H1 (cell line): ENCODE measurements at regions of chr13 and their contacts with region 1.

Region 1: DNA sequence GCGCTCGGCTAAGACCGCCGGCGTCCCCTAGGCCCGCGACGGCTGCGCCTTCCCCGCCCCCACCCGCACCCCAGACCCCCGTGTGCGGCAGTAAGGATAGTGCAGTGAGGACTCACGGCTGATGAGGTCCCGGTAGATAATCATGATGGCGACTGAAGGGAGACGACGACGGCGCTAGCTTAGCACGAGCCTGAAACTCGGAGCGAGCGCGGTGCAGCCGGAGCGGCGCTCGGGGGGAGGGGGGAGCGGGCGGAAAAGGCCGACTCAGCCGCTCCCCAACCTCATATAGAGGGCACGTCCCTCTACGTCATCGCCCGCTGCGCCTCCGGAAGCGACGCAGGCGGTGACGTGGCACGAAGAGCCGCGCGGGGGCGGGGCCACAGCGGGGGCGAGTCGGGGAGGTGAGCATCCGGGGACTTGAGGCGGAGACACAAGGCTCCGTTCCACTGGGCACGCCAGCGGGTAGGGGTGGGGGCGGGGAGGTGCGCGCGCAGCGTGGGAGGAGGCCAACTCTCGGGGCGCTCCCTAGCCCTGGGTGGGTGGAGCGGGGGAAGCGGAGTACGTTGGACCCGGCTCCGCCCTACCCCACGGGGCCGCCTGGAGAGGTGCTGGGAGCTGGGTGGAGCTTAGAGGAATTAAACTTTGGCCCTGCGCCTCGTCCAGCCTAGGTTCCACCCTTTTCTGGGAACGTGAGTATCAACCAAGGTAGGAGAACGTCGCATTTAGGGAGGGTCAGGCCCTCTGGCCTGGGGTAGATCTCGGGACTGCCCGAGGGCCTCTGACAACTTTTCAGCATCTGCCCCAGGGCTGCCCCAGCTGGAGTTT is at the start of gene TPT1:
- DNase-seq: peak; percentile 98 to 99
- H3K4me3 ChIP-seq: peak within 1 kb of the TSS; percentile 87 to 91 (median 88)
- H3K27ac ChIP-seq: peak within 1 kb of the TSS; percentile 94
- H3K4me1 ChIP-seq: peaks cover 0 to 4% (median 2%) of the 10 kb centered on the region in 4 experiments; a peak in 4 of 7 replicates
- H3K27me3 ChIP-seq: no peaks in the 10 kb centered on the region
- CTCF ChIP-seq: no peak
- EP300 ChIP-seq: peak in 1 of 2 experiments; percentile 16; a peak in 1 of 3 replicates
- POLR2A ChIP-seq: peak; percentile 91 to 95
- RAD21 ChIP-seq: no peak
- total RNA-seq, gene TPT1: 2,279 and 2,327 TPM in 2 replicates

Region 2: GRCh38 chr13:45231722-45232121 is 109.4 kb before region 1 on chr13:
- CTCF ChIA-PET with region 1: no interaction called
- POLR2A ChIA-PET with region 1: no interaction called
- DNase-seq: no peak
- H3K4me3 ChIP-seq: no peak overlapping the region
- H3K27ac ChIP-seq: no peak overlapping the region
- H3K4me1 ChIP-seq: no peaks in the 10 kb centered on the region
- H3K27me3 ChIP-seq: no peaks in the 10 kb centered on the region
- CTCF ChIP-seq: no peak
- EP300 ChIP-seq: no peak
- POLR2A ChIP-seq: no peak
- RAD21 ChIP-seq: no peak

Region 3: DNA sequence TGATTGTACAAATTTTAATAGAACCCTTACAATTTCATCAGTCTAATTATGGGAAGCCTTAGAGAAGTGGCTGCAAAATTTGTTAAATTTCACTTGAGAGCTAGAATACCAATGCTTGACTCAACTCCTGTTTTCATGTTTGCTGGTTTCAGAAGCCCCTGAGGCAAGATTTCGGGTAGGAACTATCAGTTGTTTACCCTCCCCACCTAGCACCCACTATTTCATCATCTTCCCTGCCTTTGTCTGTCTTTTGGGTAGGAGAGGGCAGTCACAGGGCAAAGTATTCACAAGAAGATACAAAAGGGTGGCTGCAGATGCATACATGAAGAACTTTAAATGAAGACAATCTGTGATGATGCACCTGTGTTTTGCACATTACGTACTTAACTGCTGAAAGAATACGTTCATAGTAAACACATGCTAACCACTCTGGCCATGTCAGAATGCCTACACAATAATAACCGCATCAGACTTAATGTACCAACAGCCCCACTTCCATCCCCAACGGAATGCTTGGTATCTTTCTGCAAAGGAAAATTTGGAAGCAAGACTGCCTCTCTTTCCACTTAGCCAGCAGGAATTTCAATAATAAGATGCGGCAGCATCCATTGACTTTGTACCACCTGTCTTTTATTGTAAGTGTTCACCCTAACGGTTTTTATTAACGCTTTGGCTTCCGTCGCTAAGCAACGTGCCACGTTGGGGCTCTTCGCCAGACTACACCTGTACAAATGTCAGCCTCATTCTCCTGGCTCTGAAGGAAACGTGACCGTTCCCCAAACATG is 30.6 kb before region 1 on chr13:
- CTCF ChIA-PET with region 1: no interaction called
- POLR2A ChIA-PET with region 1: interaction called, 319 read pairs
- DNase-seq: no peak
- H3K4me3 ChIP-seq: peak overlapping the region; percentile 9 to 65 (median 44); a peak in 7 of 8 replicates
- H3K27ac ChIP-seq: no peak overlapping the region
- H3K4me1 ChIP-seq: peaks cover 0 to 17% (median 12%) of the 10 kb centered on the region in 4 experiments
- H3K27me3 ChIP-seq: no peaks in the 10 kb centered on the region
- CTCF ChIP-seq: no peak
- EP300 ChIP-seq: no peak
- POLR2A ChIP-seq: no peak
- RAD21 ChIP-seq: no peak

Region 4: GRCh38 chr13:45325806-45326205 is 15.3 kb before region 1 on chr13:
- CTCF ChIA-PET with region 1: interaction called, 6 read pairs
- POLR2A ChIA-PET with region 1: interaction called, 319 read pairs
- DNase-seq: no peak
- H3K4me3 ChIP-seq: no peak overlapping the region
- H3K27ac ChIP-seq: no peak overlapping the region
- H3K4me1 ChIP-seq: no peaks in the 10 kb centered on the region
- H3K27me3 ChIP-seq: no peaks in the 10 kb centered on the region
- CTCF ChIP-seq: no peak
- EP300 ChIP-seq: no peak
- POLR2A ChIP-seq: no peak
- RAD21 ChIP-seq: no peak

Region 5: GRCh38 chr13:45367358-45367757 is 26.2 kb after region 1 on chr13:
- CTCF ChIA-PET with region 1: interaction called, 34 read pairs
- POLR2A ChIA-PET with region 1: interaction called, 138 read pairs
- DNase-seq: peak in 1 of 2 experiments; percentile 66
- H3K4me3 ChIP-seq: no peak overlapping the region
- H3K27ac ChIP-seq: no peak overlapping the region
- H3K4me1 ChIP-seq: peaks cover 0 to 7% (median 3%) of the 10 kb centered on the region in 4 experiments; a peak in 5 of 7 replicates
- H3K27me3 ChIP-seq: no peaks in the 10 kb centered on the region
- CTCF ChIP-seq: no peak
- EP300 ChIP-seq: no peak
- POLR2A ChIP-seq: peak in 1 of 2 experiments; percentile 37; a peak in 1 of 3 replicates
- RAD21 ChIP-seq: no peak

Region 6: GRCh38 chr13:45385907-45386553 is 44.9 kb after region 1 on chr13:
- CTCF ChIA-PET with region 1: no interaction called
- POLR2A ChIA-PET with region 1: interaction called, 10 read pairs
- DNase-seq: no peak
- H3K4me3 ChIP-seq: no peak overlapping the region
- H3K27ac ChIP-seq: no peak overlapping the region
- H3K4me1 ChIP-seq: no peaks in the 10 kb centered on the region
- H3K27me3 ChIP-seq: no peaks in the 10 kb centered on the region; a peak in 1 of 7 replicates
- CTCF ChIP-seq: no peak
- EP300 ChIP-seq: no peak
- POLR2A ChIP-seq: no peak
- RAD21 ChIP-seq: no peak

Region 7: DNA sequence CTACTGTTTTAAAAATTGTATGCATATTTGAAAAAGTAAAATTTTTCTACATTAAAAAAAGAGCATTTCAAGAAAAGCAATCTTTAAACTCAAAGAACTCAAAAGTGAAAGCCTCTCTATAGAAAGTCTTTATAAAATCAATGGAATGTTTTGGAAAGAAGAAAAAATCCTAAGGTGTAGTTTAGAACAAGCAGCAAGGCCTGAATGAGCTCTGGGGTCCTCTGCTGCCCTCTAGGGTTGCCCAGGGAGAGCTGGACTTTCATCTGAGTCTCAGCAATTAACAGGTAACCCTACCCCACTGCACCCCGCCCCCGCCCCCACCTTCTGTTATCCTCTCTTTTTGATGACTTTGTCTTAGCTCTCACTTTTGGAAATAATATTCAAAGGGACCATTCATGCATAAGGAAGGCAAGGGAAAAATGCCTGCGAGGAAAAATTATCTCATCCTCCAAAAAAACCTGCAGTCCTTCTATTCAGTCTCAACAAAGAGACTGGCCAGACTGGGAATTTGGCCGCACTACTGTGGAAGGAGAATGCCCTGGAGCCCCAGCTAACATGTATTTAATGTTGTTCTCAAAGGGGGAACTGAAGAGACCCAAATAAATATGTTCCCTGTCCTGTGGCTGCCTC is 52.9 kb after region 1 on chr13:
- CTCF ChIA-PET with region 1: no interaction called
- POLR2A ChIA-PET with region 1: interaction called, 11 read pairs
- DNase-seq: peak in 1 of 2 experiments; percentile 49
- H3K4me3 ChIP-seq: no peak overlapping the region
- H3K27ac ChIP-seq: no peak overlapping the region
- H3K4me1 ChIP-seq: no peaks in the 10 kb centered on the region
- H3K27me3 ChIP-seq: no peaks in the 10 kb centered on the region
- CTCF ChIP-seq: peak; percentile 66 to 73 (median 70)
- EP300 ChIP-seq: no peak
- POLR2A ChIP-seq: no peak
- RAD21 ChIP-seq: peak; percentile 73 to 75

Region 8: DNA sequence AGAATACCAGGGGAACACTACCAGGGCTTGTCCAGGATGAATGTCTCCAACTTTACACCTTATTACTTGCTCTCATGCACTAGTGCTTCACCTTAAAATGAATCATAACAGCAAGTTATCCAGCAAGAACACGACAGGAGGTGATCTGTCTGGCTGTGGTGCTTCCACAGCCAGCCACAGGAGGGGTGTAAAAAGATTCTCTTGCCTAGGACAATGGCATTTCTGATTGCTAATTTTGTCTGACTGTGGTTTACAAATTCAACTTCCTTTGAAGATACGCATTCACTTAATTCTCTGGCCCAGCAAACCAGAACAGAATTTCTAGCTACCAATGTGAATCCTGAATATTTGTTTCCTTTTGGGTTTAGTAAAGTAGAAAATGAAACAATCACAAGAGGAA is 100.5 kb after region 1 on chr13:
- CTCF ChIA-PET with region 1: no interaction called
- POLR2A ChIA-PET with region 1: no interaction called
- DNase-seq: no peak
- H3K4me3 ChIP-seq: no peak overlapping the region
- H3K27ac ChIP-seq: no peak overlapping the region
- H3K4me1 ChIP-seq: peaks cover 0 to 3% (median 0%) of the 10 kb centered on the region in 4 experiments; a peak in 1 of 7 replicates
- H3K27me3 ChIP-seq: no peaks in the 10 kb centered on the region
- CTCF ChIP-seq: no peak
- EP300 ChIP-seq: no peak
- POLR2A ChIP-seq: no peak
- RAD21 ChIP-seq: 0 out of 4 replicates have a peak, but pooled peaks of 1 of the 2 experiments have one; percentile 3

Region 9: GRCh38 chr13:45538382-45538781 is 197.2 kb after region 1 on chr13:
- CTCF ChIA-PET with region 1: no interaction called
- POLR2A ChIA-PET with region 1: no interaction called
- DNase-seq: no peak
- H3K4me3 ChIP-seq: no peak overlapping the region
- H3K27ac ChIP-seq: no peak overlapping the region
- H3K4me1 ChIP-seq: peaks cover 0 to 2% (median 0%) of the 10 kb centered on the region in 4 experiments; a peak in 3 of 7 replicates
- H3K27me3 ChIP-seq: no peaks in the 10 kb centered on the region
- CTCF ChIP-seq: no peak
- EP300 ChIP-seq: no peak
- POLR2A ChIP-seq: no peak
- RAD21 ChIP-seq: no peak